Ascending aorta (tissue), 2 donors: ENCODE measurements at regions of chr7 and their contacts with region 1.

Region 1: GRCh38 chr7:148987010-148987750 is 41.1 kb downstream of the PDIA4 start:
- DNase-seq: peak; percentile 47 to 93
- H3K4me3 ChIP-seq: peak overlapping the region; percentile 70 to 72
- H3K27ac ChIP-seq: peak overlapping the region; percentile 88 to 94
- H3K4me1 ChIP-seq: peaks cover 0 to 16% of the 10 kb centered on the region in 2 donors
- H3K27me3 ChIP-seq: no peaks in the 10 kb centered on the region
- CTCF ChIP-seq: no peak

Region 2: GRCh38 chr7:148698397-148699023 is 288.7 kb before region 1 on chr7 and contains the start of gene CUL1:
- intact Hi-C with region 1: loop called (anchors 1 kb)
- DNase-seq: peak; percentile 36 to 92
- H3K4me3 ChIP-seq: peak within 1 kb of the TSS; percentile 97 to 99
- H3K27ac ChIP-seq: peak within 1 kb of the TSS; percentile 99 to 100
- H3K4me1 ChIP-seq: peaks cover 4 to 30% of the 10 kb centered on the region in 2 donors
- H3K27me3 ChIP-seq: no peaks in the 10 kb centered on the region
- CTCF ChIP-seq: no peak
- total RNA-seq, gene CUL1: 16.3 TPM

Region 3: DNA sequence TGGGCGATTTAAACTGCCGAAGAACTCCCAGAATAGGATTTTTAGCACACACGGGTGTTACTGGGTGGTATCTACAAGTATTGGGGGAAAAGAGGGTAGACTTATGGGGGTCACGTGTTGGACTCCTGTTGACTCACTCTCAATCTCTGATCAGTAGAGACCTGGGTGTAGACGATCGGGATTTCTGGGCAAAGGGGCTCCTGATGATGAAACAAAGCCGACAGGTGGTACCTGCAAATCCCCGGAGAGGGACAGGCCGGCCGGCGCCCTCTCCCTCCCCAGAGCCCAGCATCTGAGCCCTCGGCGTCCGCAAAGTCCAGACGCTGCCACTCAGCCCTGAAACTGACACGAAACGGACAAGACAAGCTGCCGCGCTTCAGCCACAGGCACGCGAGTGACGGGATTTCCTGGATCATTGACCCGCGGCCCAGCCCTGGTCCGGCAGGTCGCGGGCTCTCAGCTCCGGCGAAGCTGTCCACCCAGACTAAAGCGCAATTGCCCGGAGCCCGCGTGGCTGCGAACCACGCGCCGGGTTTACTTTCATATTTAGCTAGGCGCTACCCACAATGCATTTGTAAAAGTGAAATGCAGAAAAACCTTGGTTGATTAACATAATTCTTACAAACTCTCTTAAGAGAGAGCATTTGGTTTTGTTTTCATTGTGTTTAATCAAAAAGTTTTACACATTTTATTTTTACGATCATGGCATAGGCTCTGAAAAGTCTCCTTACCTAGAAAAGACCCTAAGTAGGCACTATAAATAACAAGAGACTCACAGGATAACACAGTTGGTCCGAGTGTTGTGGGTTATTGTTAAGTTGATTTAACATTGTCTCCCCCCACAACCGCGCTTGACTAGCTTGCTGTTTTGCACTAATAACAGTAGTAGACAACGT is 46.2 kb before region 1 on chr7:
- intact Hi-C with region 1: loop called (anchors 2 kb)
- DNase-seq: peak; percentile 38 to 90
- H3K4me3 ChIP-seq: peak overlapping the region; percentile 84 to 86
- H3K27ac ChIP-seq: peak overlapping the region; percentile 90 to 93
- H3K4me1 ChIP-seq: no peaks in the 10 kb centered on the region
- H3K27me3 ChIP-seq: no peaks in the 10 kb centered on the region
- CTCF ChIP-seq: no peak

Region 4: GRCh38 chr7:149067876-149068275 is 80.7 kb after region 1 on chr7:
- intact Hi-C with region 1: loop called (anchors 1 kb)
- DNase-seq: no peak
- H3K4me3 ChIP-seq: no peak overlapping the region
- H3K27ac ChIP-seq: no peak overlapping the region
- H3K4me1 ChIP-seq: no peaks in the 10 kb centered on the region
- H3K27me3 ChIP-seq: no peaks in the 10 kb centered on the region
- CTCF ChIP-seq: no peak

Region 5: GRCh38 chr7:149090397-149091195 is 103.4 kb after region 1 on chr7 and contains the start of gene ZNF786:
- intact Hi-C with region 1: loop called (anchors 1 kb)
- DNase-seq: peak; percentile 29 to 92
- H3K4me3 ChIP-seq: peak within 1 kb of the TSS; percentile 95 to 97
- H3K27ac ChIP-seq: peak within 1 kb of the TSS; percentile 96 to 97
- H3K4me1 ChIP-seq: peaks cover 0 to 7% of the 10 kb centered on the region in 2 donors
- H3K27me3 ChIP-seq: no peaks in the 10 kb centered on the region
- CTCF ChIP-seq: peak; percentile 91 to 97 (median 94)
- total RNA-seq, gene ZNF786: 8.4 TPM

Region 6: GRCh38 chr7:149147072-149147751 is 160.0 kb after region 1 on chr7 and contains the start of gene ZNF398:
- intact Hi-C with region 1: loop called (anchors 5 kb)
- DNase-seq: peak in 1 of 2 donors; percentile 85
- H3K4me3 ChIP-seq: peak within 1 kb of the TSS; percentile 90 to 96
- H3K27ac ChIP-seq: peak within 1 kb of the TSS; percentile 80 to 92
- H3K4me1 ChIP-seq: peaks cover 0 to 14% of the 10 kb centered on the region in 2 donors
- H3K27me3 ChIP-seq: no peaks in the 10 kb centered on the region
- CTCF ChIP-seq: peak; percentile 48 to 77 (median 49)
- total RNA-seq, gene ZNF398: 19.6 TPM

Region 7: DNA sequence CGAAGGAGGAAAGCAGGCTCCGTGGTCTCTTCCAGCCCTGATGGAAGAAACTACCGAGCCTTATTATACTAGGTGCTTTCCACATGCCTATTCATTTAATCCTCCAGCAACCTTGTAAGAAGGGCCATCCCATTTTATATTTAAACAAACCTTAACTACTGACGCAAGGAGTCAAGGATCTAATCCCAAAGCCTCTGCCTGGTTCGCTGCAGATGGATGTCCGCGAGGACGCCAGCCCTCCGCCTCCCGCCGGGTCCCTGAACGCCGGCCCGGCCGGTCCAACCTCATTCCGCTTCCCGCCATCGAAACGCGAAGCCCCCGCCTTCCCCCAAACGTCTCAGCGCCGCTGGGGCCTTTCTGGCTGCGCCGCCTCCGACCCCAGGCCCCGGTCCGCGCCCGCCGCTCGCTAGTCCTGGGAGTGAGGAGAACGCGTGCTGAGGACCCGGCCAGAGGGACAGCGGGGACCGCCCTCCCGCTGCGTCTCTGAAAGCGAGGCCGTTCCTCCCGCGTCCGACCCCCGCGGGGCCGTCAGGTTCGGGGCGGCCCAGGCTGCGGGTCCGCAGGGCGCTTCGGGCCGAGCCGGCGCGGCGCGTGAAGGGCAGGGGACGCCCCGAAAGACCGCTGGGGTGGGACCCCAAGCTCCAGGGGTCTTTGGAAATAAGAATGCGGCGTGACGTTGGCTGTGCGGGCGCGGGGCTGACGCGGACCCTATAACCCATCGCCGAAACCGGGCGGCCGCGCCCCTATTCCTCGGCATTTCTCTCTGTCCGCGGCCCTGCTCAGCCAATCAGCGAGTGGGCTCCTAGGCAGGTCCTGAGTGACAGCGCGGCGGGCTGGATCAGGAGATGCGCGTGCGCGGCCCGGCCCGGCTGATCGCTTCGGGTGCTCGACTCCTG is 886.1 kb after region 1 on chr7 and contains the start of gene ATP6V0E2:
- intact Hi-C with region 1: no loop called
- DNase-seq: peak; percentile 81 to 97
- H3K4me3 ChIP-seq: peak within 1 kb of the TSS; percentile 86 to 89
- H3K27ac ChIP-seq: peak within 1 kb of the TSS; percentile 84 to 86
- H3K4me1 ChIP-seq: peaks cover 11% of the 10 kb centered on the region in 2 donors
- H3K27me3 ChIP-seq: no peaks in the 10 kb centered on the region
- CTCF ChIP-seq: no peak
- total RNA-seq, gene ATP6V0E2: 29.5 TPM